ENCODE measurements at regions of chr5 and their contacts with region 1.

Region 1: DNA sequence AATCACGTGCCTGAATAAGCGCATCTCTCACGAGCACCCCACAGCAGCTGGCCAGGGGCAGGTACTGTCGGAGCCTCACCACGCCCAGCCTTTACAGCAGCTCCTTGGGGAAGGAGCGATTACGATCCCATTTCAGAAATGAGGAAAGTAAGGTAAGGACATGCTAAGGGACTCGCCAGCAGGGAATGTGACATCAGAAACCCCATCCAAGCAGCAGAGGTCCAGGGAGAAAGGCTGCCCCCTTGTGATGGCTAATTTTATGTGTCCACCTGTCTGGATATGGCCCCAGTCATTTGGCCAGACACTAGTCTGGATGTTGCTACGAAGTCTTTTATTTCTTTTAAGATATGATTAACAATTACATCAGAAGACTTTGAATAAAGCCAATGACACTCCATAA is 77.3 kb downstream of the UBE2QL1 start:
- DNase-seq: no peak
- ATAC-seq: peak; percentile 43 to 83 (median 68)
- H3K4me3 ChIP-seq: no peak overlapping the region
- H3K27ac ChIP-seq: no peak overlapping the region
- H3K4me1 ChIP-seq: peaks cover 16% of the 10 kb centered on the region
- H3K27me3 ChIP-seq: peaks cover 0 to 1% (median 0%) of the 10 kb centered on the region in 3 donors
- CTCF ChIP-seq: peak; percentile 33

Region 2: DNA sequence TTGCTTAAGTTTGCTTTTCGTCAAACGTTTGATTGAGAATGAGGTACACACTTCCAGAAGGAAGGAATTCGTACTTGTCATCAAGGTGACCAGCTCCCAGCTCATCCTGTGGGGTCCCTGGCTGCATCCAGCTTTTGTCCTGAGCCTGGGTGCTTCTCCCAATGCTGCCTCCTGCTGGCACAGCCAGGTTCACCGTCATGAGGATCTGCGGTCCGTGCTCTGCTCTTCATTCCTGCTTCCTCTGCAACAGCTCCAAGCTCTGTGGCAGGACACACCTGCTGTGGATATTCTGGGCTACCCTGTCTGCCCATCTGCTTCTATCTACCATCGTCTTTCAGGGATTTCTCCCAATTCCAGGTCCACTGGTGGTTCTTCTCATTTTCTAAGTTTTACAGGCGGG is 90.6 kb before region 1 on chr5:
- intact Hi-C with region 1: no loop called
- DNase-seq: peak in 1 of 2 donors; percentile 63
- ATAC-seq: peak; percentile 52 to 64 (median 58)
- H3K4me3 ChIP-seq: no peak overlapping the region
- H3K27ac ChIP-seq: no peak overlapping the region
- H3K4me1 ChIP-seq: peaks cover 13% of the 10 kb centered on the region
- H3K27me3 ChIP-seq: peaks cover 0 to 2% (median 0%) of the 10 kb centered on the region in 3 donors
- CTCF ChIP-seq: peak; percentile 41

Region 3: GRCh38 chr5:6568383-6568782 is 42.5 kb after region 1 on chr5:
- intact Hi-C with region 1: loop called in 1 of 2 experiments (anchors 2 kb)
- DNase-seq: no peak
- ATAC-seq: no peak
- H3K4me3 ChIP-seq: no peak overlapping the region
- H3K27ac ChIP-seq: no peak overlapping the region
- H3K4me1 ChIP-seq: no peaks in the 10 kb centered on the region
- H3K27me3 ChIP-seq: no peaks in the 10 kb centered on the region
- CTCF ChIP-seq: no peak

Measured in psoas muscle (tissue), 8 donors.